ENCODE measurements at regions of chr14 and their contacts with region 1.

Region 1: GRCh38 chr14:61694830-61695694 is at the start of gene HIF1A:
- DNase-seq: peak; percentile 95
- H3K4me3 ChIP-seq: peak within 1 kb of the TSS; percentile 87
- CTCF ChIP-seq: peak; percentile 45

Region 2: GRCh38 chr14:61553725-61554641 is 141.1 kb before region 1 on chr14:
- CTCF ChIA-PET with region 1: no interaction called
- POLR2A ChIA-PET with region 1: interaction called, 12 read pairs
- DNase-seq: peak; percentile 99
- H3K4me3 ChIP-seq: no peak overlapping the region
- CTCF ChIP-seq: no peak

Region 3: DNA sequence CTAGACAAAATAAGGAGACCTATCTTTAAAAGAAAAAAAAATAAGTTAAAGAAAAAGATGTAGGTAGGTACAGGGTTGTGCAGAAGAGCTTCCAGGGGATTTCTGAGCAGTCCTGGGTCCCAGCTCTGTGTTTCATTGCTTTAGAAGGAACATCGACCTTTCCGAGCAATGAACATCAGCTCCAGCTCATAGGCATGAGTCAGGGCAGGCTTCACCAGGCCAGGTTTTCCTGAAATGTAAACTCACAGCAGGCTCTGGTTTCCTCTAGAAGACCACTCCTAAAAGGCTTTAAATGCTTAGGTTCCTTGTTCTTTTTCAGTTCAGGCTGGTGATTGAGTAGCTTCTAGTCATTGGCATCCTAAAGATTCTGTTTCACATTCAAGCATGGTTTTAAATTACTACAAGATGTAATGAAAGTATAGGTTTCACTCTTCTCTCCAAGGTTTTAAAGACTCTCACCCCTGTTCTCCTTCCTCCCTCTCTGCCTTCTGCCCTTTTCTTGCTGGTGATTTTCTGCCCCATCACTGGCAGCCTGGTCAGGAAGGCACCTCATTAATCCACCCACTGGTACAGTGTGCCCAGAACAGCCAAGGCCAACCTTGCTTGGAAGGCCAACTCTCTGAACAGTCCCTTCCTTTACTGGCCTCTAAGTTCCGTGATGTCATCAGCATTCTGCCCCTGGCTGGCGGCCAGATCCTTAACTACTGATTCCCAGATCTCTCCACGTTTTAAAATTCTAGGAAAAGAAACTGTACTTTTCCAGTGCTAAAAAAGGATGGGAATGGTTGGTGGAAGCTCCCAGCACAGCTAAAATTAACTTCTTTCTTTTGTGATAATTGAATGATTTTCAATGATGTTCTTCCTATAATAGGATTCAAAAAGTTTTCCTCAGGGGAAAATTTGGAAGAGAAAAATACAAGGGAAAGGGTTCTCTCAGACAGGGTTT is 109.2 kb before region 1 on chr14:
- CTCF ChIA-PET with region 1: no interaction called
- POLR2A ChIA-PET with region 1: interaction called, 10 read pairs
- DNase-seq: no peak
- H3K4me3 ChIP-seq: no peak overlapping the region
- CTCF ChIP-seq: no peak

Region 4: GRCh38 chr14:61678975-61679374 is 16.1 kb before region 1 on chr14:
- CTCF ChIA-PET with region 1: interaction called, 15 read pairs
- POLR2A ChIA-PET with region 1: no interaction called
- DNase-seq: no peak
- H3K4me3 ChIP-seq: no peak overlapping the region
- CTCF ChIP-seq: no peak

Region 5: GRCh38 chr14:61730756-61731373 is 35.8 kb after region 1 on chr14:
- CTCF ChIA-PET with region 1: no interaction called
- POLR2A ChIA-PET with region 1: no interaction called
- DNase-seq: no peak
- H3K4me3 ChIP-seq: no peak overlapping the region
- CTCF ChIP-seq: no peak